K562 (cell line): ENCODE measurements at regions of chr2 and their contacts with region 1.

Region 1: GRCh38 chr2:149587220-149587949 is at the start of gene MMADHC:
- DNase-seq: peak; percentile 94 to 99 (median 96)
- ATAC-seq: peak; percentile 97
- H3K4me3 ChIP-seq: peak within 1 kb of the TSS; percentile 67
- H3K27ac ChIP-seq: peak within 1 kb of the TSS; percentile 94
- H3K4me1 ChIP-seq: peaks cover 0 to 10% of the 10 kb centered on the region in 2 experiments; a peak in 2 of 5 replicates
- H3K27me3 ChIP-seq: no peaks in the 10 kb centered on the region
- CTCF ChIP-seq: no peak
- EP300 ChIP-seq: no peak
- POLR2A ChIP-seq: peak; percentile 99
- RAD21 ChIP-seq: no peak
- polyA plus RNA-seq, gene MMADHC: 729 to 850 TPM

Region 2: DNA sequence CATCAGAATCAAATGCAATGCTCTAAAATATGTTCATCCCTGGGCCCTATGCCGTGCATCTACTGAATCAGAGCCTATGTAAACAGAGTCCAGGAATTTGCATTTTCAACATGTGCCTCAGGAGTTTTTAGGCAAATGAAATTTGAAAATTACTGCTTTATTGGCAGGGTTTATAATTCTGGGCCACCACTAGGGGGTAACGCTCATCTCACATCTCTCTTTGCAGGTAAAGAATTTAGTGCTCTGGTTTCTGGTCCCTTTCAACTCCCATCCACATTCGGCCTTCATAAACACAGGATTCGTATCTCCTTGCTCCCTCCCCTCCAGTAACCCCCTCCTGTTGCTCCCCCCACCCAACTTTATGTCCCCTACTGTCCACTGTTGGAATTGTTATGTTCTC is 499.6 kb before region 1 on chr2:
- CTCF ChIA-PET with region 1: no interaction called
- POLR2A ChIA-PET with region 1: no interaction called
- in situ Hi-C with region 1: no loop called
- intact Hi-C with region 1: no loop called
- DNase-seq: no peak
- ATAC-seq: peak; percentile 35; the same call in 1 of the 3 replicates
- H3K4me3 ChIP-seq: no peak overlapping the region
- H3K27ac ChIP-seq: no peak overlapping the region
- H3K4me1 ChIP-seq: no peaks in the 10 kb centered on the region
- H3K27me3 ChIP-seq: no peaks in the 10 kb centered on the region
- CTCF ChIP-seq: peak; percentile 15 to 38 (median 32); a peak in 3 of 6 replicates
- EP300 ChIP-seq: no peak
- POLR2A ChIP-seq: no peak
- RAD21 ChIP-seq: no peak

Region 3: DNA sequence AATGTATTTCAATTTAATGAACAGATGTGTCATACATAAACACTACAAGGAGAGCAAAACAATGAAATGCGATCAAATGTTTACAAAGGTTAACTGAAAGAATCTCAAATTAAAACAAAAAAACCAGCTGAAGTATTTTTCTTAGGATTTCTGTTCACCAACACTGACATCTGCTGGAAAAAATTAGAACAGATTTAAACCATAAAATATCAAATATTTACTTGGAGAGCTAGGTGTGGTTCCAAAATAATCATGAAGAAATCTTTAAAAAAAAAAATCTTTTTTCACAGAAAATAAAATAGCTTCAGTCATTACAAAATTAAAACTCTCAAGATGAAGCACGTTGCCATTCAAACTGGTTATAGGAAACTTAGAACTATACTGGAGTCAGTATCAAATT is 13.6 kb before region 1 on chr2:
- CTCF ChIA-PET with region 1: no interaction called
- POLR2A ChIA-PET with region 1: interaction called, 18 read pairs
- in situ Hi-C with region 1: no loop called
- intact Hi-C with region 1: no loop called
- DNase-seq: no peak
- ATAC-seq: no peak
- H3K4me3 ChIP-seq: no peak overlapping the region
- H3K27ac ChIP-seq: no peak overlapping the region
- H3K4me1 ChIP-seq: no peaks in the 10 kb centered on the region
- H3K27me3 ChIP-seq: no peaks in the 10 kb centered on the region
- CTCF ChIP-seq: peak in 1 of 3 experiments; percentile 35; a peak in 1 of 6 replicates
- EP300 ChIP-seq: no peak
- POLR2A ChIP-seq: no peak
- RAD21 ChIP-seq: no peak